ENCODE measurements at regions of chr5 and their contacts with region 1.

Region 1: DNA sequence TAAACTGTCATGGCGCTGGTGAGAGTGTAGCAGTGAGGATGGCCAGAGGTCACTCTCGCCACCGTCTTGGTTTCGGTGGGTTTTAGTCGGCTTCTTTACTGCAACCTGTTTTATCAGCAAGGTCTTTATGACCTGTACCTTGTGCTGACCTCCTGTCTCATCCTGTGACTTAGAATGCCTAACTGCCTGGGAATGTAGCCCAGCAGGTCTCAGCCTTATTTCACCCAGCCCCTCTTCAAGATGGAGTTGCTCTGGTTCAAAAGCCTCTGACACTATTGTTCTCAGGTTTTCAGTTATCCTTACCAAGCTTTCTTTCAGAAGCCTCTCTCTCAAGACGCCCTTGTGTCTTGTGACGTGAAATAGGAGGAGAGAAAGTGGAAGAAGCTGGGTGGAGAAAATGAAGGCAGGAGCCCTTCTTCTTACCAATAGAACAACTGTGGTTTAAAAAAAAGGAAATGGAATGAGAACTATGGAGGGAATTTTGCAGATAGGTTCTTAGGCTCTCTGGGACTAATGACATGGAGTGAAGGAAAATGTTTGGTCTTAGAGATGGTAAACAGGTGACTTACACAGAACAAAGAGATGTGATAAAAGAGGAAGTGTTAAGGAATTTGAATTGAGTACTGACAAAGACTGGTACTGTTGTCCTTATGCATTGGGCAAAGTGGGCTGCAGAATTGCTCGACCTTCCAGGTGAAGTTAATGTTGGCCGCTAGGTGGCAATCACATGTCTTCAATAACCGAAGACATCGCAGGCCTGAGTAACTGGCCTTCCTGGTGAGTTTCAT is 133.3 kb upstream of the RAI14 start:
- DNase-seq: peak; percentile 8 to 75 (median 40)
- ATAC-seq: peak; percentile 26
- H3K4me3 ChIP-seq: no peak overlapping the region
- H3K4me3 Mint-ChIP-seq: no peak overlapping the region
- H3K27ac ChIP-seq: no peak overlapping the region
- H3K27ac Mint-ChIP-seq: no peak overlapping the region
- H3K4me1 ChIP-seq: no peaks in the 10 kb centered on the region
- H3K4me1 Mint-ChIP-seq: no peaks in the 10 kb centered on the region
- H3K27me3 ChIP-seq: peaks cover 0 to 2% of the 10 kb centered on the region in 2 experiments
- H3K27me3 Mint-ChIP-seq: peaks cover 9% of the 10 kb centered on the region
- CTCF ChIP-seq: peak; percentile 82

Region 2: DNA sequence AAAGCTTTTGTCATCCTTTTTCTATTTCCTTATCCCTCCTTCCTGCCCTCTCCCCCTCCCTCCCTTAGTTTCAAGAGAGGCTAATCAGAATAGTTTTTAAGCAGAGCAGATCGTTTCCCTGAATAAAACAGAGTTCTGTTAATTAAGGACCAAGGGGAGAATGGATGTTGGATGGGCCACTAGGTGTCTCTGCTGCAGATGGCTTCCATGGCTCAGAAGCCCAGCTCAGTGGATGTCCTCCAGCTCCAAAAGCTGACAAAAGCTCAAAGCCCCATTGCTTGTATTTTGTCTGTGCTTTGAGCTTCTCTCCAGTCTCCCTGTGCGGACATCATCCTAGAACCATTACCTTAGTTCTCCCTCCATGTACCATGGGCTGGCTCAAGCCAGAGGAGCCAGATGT is 1832.6 kb before region 1 on chr5:
- CTCF ChIA-PET with region 1: no interaction called
- POLR2A ChIA-PET with region 1: no interaction called
- intact Hi-C with region 1: no loop called
- DNase-seq: no peak
- ATAC-seq: no peak
- H3K4me3 ChIP-seq: no peak overlapping the region
- H3K4me3 Mint-ChIP-seq: no peak overlapping the region
- H3K27ac ChIP-seq: no peak overlapping the region
- H3K27ac Mint-ChIP-seq: no peak overlapping the region
- H3K4me1 ChIP-seq: no peaks in the 10 kb centered on the region
- H3K4me1 Mint-ChIP-seq: no peaks in the 10 kb centered on the region
- H3K27me3 ChIP-seq: no peaks in the 10 kb centered on the region
- H3K27me3 Mint-ChIP-seq: peaks cover 6% of the 10 kb centered on the region
- CTCF ChIP-seq: no peak

Region 3: GRCh38 chr5:34838785-34839714 is 316.3 kb after region 1 on chr5 and contains the start of gene TTC23L:
- CTCF ChIA-PET with region 1: no interaction called
- POLR2A ChIA-PET with region 1: no interaction called
- intact Hi-C with region 1: loop called in 1 of 2 experiments (anchors 5 kb)
- DNase-seq: peak; percentile 84 to 98 (median 87)
- ATAC-seq: peak; percentile 89
- H3K4me3 ChIP-seq: peak within 1 kb of the TSS; percentile 78
- H3K4me3 Mint-ChIP-seq: peak within 1 kb of the TSS; percentile 95
- H3K27ac ChIP-seq: peak within 1 kb of the TSS; percentile 63 to 76
- H3K27ac Mint-ChIP-seq: peak within 1 kb of the TSS; percentile 88
- H3K4me1 ChIP-seq: peaks cover 16% of the 10 kb centered on the region
- H3K4me1 Mint-ChIP-seq: peaks cover 17% of the 10 kb centered on the region
- H3K27me3 ChIP-seq: no peaks in the 10 kb centered on the region
- H3K27me3 Mint-ChIP-seq: peaks cover 8% of the 10 kb centered on the region
- CTCF ChIP-seq: no peak
- total RNA-seq, gene TTC23L: 0.20 TPM in 1 of 2 experiments, not detected in the other

Region 4: GRCh38 chr5:34898258-34898895 is 375.6 kb after region 1 on chr5:
- CTCF ChIA-PET with region 1: interaction called, 12 read pairs
- POLR2A ChIA-PET with region 1: no interaction called
- intact Hi-C with region 1: loop called (anchors 1 kb)
- DNase-seq: peak; percentile 38 to 78 (median 53)
- ATAC-seq: peak; percentile 73
- H3K4me3 ChIP-seq: no peak overlapping the region
- H3K4me3 Mint-ChIP-seq: no peak overlapping the region
- H3K27ac ChIP-seq: no peak overlapping the region
- H3K27ac Mint-ChIP-seq: no peak overlapping the region
- H3K4me1 ChIP-seq: no peaks in the 10 kb centered on the region
- H3K4me1 Mint-ChIP-seq: no peaks in the 10 kb centered on the region
- H3K27me3 ChIP-seq: no peaks in the 10 kb centered on the region
- H3K27me3 Mint-ChIP-seq: no peaks in the 10 kb centered on the region
- CTCF ChIP-seq: peak; percentile 84

Region 5: GRCh38 chr5:35003018-35003957 is 480.5 kb after region 1 on chr5:
- CTCF ChIA-PET with region 1: no interaction called
- POLR2A ChIA-PET with region 1: no interaction called
- intact Hi-C with region 1: loop called in 1 of 2 experiments (anchors 5 kb)
- DNase-seq: peak in 13 of 14 experiments; percentile 19 to 63 (median 29)
- ATAC-seq: no peak
- H3K4me3 ChIP-seq: no peak overlapping the region
- H3K4me3 Mint-ChIP-seq: no peak overlapping the region
- H3K27ac ChIP-seq: no peak overlapping the region
- H3K27ac Mint-ChIP-seq: no peak overlapping the region
- H3K4me1 ChIP-seq: no peaks in the 10 kb centered on the region
- H3K4me1 Mint-ChIP-seq: no peaks in the 10 kb centered on the region
- H3K27me3 ChIP-seq: peaks cover 5 to 12% of the 10 kb centered on the region in 2 experiments
- H3K27me3 Mint-ChIP-seq: peaks cover 60% of the 10 kb centered on the region
- CTCF ChIP-seq: peak; percentile 75